Activated B cell treated with CpG ODN at 0.5 μM for 24 hours (primary cell): ENCODE measurements at regions of chr12 and their contacts with region 1.

Region 1: GRCh38 chr12:108731105-108731865 is at the start of gene CORO1C:
- DNase-seq: peak; percentile 98
- ATAC-seq: peak; percentile 73
- H3K4me3 Mint-ChIP-seq: peak within 1 kb of the TSS; percentile 97
- H3K27ac Mint-ChIP-seq: peak within 1 kb of the TSS; percentile 96
- H3K4me1 Mint-ChIP-seq: peaks cover 48% of the 10 kb centered on the region
- H3K27me3 Mint-ChIP-seq: no peaks in the 10 kb centered on the region
- CTCF ChIP-seq: no peak
- total RNA-seq, gene CORO1C: 68.3 and 69.4 TPM in 2 replicates

Region 2: GRCh38 chr12:107685360-107686248 is 1045.7 kb before region 1 on chr12 and contains the start of gene PWP1:
- CTCF ChIA-PET with region 1: no interaction called
- POLR2A ChIA-PET with region 1: no interaction called
- intact Hi-C with region 1: loop called (anchors 1 kb)
- DNase-seq: peak; percentile 93
- ATAC-seq: peak; percentile 90
- H3K4me3 Mint-ChIP-seq: peak within 1 kb of the TSS; percentile 96
- H3K27ac Mint-ChIP-seq: peak within 1 kb of the TSS; percentile 97
- H3K4me1 Mint-ChIP-seq: peaks cover 23% of the 10 kb centered on the region
- H3K27me3 Mint-ChIP-seq: no peaks in the 10 kb centered on the region
- CTCF ChIP-seq: no peak
- total RNA-seq, gene PWP1: 49.4 and 53.5 TPM in 2 replicates

Region 3: DNA sequence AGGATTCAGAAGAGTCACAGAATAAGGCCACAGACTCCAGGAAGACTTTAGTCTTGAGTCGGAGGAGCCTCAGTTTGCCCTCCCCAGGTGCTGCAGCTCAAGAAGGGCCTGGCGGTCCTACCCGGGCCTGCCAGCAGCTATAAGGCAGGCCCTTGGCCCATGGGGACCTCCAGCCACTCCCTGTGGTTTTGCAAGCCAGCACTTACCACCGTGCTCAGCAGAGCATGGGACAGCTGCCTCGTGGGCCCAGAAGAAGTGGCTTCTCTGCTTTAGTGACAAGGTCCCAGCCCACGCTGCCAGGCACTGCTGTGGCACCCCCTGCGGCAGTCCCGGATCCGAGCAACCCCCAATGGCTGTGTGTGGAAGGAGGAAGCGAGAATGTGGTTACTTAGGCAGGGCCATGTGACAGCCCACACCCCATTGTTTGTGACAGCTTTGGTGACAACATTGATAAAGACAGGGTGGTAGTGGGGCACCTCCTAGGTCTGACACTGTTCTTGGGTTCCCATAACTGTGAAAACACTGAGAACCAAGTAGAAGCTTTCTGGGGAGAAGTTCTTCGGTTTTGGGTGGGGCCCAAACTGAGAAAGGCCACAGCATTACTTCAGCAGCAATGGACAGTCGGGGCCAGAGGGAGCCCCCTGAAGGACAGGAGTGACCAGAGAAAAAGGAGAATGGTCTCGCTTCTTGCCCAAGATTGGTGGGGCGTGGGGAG is 97.6 kb before region 1 on chr12 and contains the start of gene SELPLG:
- CTCF ChIA-PET with region 1: no interaction called
- POLR2A ChIA-PET with region 1: interaction called, 23 read pairs
- intact Hi-C with region 1: loop called (anchors 1 kb)
- DNase-seq: peak; percentile 79
- ATAC-seq: peak; percentile 76
- H3K4me3 Mint-ChIP-seq: peak within 1 kb of the TSS; percentile 85
- H3K27ac Mint-ChIP-seq: peak within 1 kb of the TSS; percentile 98
- H3K4me1 Mint-ChIP-seq: peaks cover 95% of the 10 kb centered on the region
- H3K27me3 Mint-ChIP-seq: no peaks in the 10 kb centered on the region
- CTCF ChIP-seq: no peak
- total RNA-seq, gene SELPLG: 1.8 and 2.0 TPM in 2 replicates

Region 4: DNA sequence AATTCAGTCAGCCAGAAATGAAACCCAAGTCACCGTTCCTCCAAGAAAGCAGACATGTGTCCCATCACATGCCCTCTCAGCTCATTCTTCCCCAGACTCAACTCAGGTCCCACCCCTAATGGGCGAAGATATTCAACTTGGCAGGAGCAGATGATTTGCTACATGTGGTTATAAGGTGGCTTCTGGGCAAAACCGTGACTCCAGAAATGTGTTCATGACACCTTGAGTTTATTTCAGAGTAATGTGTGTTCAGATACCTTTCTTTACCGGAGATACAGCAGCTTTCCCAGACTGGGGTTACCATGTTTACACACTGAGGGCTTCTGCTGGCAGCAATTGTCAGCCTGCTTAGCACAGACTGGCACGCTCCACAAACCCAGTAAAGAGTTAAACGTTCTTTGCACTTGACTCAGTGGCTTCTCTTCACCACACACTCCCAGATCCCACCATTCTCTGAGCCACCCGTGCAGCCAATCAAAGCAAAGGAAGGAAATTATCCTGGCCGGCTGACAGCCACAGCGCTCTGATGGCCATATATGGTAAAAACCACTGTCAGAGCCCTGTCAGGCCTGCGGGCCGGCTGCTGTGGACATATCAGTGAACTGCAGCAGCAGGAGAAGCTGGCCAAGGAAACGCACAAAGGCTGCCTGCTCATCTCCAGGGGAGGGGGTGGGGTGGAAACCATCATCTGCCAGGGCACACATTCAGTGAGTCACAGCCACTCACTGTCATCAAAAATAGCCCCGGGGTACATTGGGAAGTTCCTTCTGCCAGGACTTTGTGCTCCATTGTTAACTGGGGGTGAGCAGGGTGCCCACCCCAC is 39.9 kb before region 1 on chr12:
- CTCF ChIA-PET with region 1: interaction called, 4 read pairs
- POLR2A ChIA-PET with region 1: interaction called, 14 read pairs
- intact Hi-C with region 1: loop called (anchors 1 kb)
- DNase-seq: peak; percentile 28
- ATAC-seq: peak; percentile 84
- H3K4me3 Mint-ChIP-seq: peak overlapping the region; percentile 77
- H3K27ac Mint-ChIP-seq: peak overlapping the region; percentile 89
- H3K4me1 Mint-ChIP-seq: peaks cover 54% of the 10 kb centered on the region
- H3K27me3 Mint-ChIP-seq: no peaks in the 10 kb centered on the region
- CTCF ChIP-seq: no peak

Region 5: GRCh38 chr12:108803428-108804105 is 72.3 kb after region 1 on chr12:
- CTCF ChIA-PET with region 1: interaction called, 3 read pairs
- POLR2A ChIA-PET with region 1: no interaction called
- intact Hi-C with region 1: loop called (anchors 2 kb)
- DNase-seq: no peak
- ATAC-seq: peak; percentile 87
- H3K4me3 Mint-ChIP-seq: no peak overlapping the region
- H3K27ac Mint-ChIP-seq: peak overlapping the region; percentile 56
- H3K4me1 Mint-ChIP-seq: peaks cover 21% of the 10 kb centered on the region
- H3K27me3 Mint-ChIP-seq: no peaks in the 10 kb centered on the region
- CTCF ChIP-seq: peak; percentile 93